Esophagus muscularis mucosa (tissue), 4 donors: ENCODE measurements at regions of chr3 and their contacts with region 1.

Region 1: DNA sequence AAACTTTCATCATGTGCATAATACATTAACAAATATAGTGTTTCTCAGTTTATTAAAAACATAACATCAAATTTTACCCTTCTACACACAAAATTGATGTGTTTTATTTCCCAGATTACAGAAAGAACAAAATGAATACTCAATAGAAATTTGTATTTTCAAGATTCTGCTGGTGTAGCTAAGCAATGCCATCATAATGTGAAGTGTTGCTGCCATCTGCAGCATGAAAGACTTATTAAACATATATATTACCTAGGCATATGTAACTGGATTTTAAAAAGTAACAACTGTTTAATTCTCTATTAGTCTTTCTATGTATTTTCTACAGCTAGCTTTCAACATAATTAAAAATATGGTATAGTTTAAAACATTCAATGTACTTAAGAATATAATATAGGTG is 27.5 kb downstream of the PLSCR5 start:
- DNase-seq: no peak
- H3K4me3 ChIP-seq: no peak overlapping the region
- H3K27ac ChIP-seq: no peak overlapping the region
- H3K4me1 ChIP-seq: no peaks in the 10 kb centered on the region
- H3K27me3 ChIP-seq: no peaks in the 10 kb centered on the region
- CTCF ChIP-seq: peak; percentile 39 to 47 (median 43)
- EP300 ChIP-seq: no peak
- POLR2A ChIP-seq: no peak

Region 2: DNA sequence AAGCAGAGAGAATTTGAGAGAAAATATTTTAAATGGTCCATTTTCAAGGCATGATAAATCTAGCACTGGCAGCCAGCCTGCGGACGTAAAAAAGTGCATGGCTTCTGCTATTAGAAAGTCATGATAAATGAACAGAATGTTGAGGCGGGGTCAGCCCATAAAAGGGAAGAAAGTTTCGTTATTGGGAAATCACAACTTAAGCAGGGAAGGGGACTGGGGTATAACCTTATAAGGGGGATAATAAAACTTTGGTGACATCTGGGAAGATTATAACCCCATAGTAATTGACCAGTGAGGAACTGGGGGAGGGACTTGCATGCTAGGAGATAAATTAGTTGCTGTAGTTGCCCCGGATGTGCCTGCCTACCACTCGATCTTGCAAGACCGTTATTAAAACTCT is 238.3 kb before region 1 on chr3:
- intact Hi-C with region 1: loop called (anchors 5 kb)
- DNase-seq: no peak
- H3K4me3 ChIP-seq: peak overlapping the region; percentile 6 to 30 (median 18)
- H3K27ac ChIP-seq: peak overlapping the region in 3 of 4 donors; percentile 34 to 65 (median 35)
- H3K4me1 ChIP-seq: peaks cover 5 to 48% (median 34%) of the 10 kb centered on the region in 4 donors
- H3K27me3 ChIP-seq: no peaks in the 10 kb centered on the region
- CTCF ChIP-seq: no peak
- EP300 ChIP-seq: no peak
- POLR2A ChIP-seq: no peak

Region 3: GRCh38 chr3:147157631-147158030 is 580.0 kb after region 1 on chr3:
- intact Hi-C with region 1: no loop called
- DNase-seq: no peak
- H3K4me3 ChIP-seq: no peak overlapping the region
- H3K27ac ChIP-seq: no peak overlapping the region
- H3K4me1 ChIP-seq: no peaks in the 10 kb centered on the region
- H3K27me3 ChIP-seq: no peaks in the 10 kb centered on the region
- CTCF ChIP-seq: no peak
- EP300 ChIP-seq: no peak
- POLR2A ChIP-seq: no peak